ENCODE measurements at regions of chr15 and their contacts with region 1.

Region 1: GRCh38 chr15:72827226-72827625 is 43.7 kb upstream of the ADPGK start:
- DNase-seq: no peak
- H3K4me3 ChIP-seq: no peak overlapping the region
- H3K27ac ChIP-seq: no peak overlapping the region
- H3K4me1 ChIP-seq: peaks cover 0 to 9% (median 2%) of the 10 kb centered on the region in 4 donors
- H3K27me3 ChIP-seq: peaks cover 0 to 6% (median 0%) of the 10 kb centered on the region in 4 donors
- CTCF ChIP-seq: no peak
- EP300 ChIP-seq: no peak
- POLR2A ChIP-seq: no peak

Region 2: GRCh38 chr15:72521682-72522081 is 305.5 kb before region 1 on chr15:
- intact Hi-C with region 1: no loop called
- DNase-seq: no peak
- H3K4me3 ChIP-seq: no peak overlapping the region
- H3K27ac ChIP-seq: no peak overlapping the region
- H3K4me1 ChIP-seq: peaks cover 2 to 22% (median 10%) of the 10 kb centered on the region in 4 donors
- H3K27me3 ChIP-seq: no peaks in the 10 kb centered on the region
- CTCF ChIP-seq: no peak
- EP300 ChIP-seq: no peak
- POLR2A ChIP-seq: no peak

Region 3: GRCh38 chr15:72813345-72814004 is 13.8 kb before region 1 on chr15:
- intact Hi-C with region 1: loop called (anchors 2 kb)
- DNase-seq: no peak
- H3K4me3 ChIP-seq: no peak overlapping the region
- H3K27ac ChIP-seq: no peak overlapping the region
- H3K4me1 ChIP-seq: no peaks in the 10 kb centered on the region
- H3K27me3 ChIP-seq: no peaks in the 10 kb centered on the region
- CTCF ChIP-seq: no peak
- EP300 ChIP-seq: no peak
- POLR2A ChIP-seq: no peak

Region 4: DNA sequence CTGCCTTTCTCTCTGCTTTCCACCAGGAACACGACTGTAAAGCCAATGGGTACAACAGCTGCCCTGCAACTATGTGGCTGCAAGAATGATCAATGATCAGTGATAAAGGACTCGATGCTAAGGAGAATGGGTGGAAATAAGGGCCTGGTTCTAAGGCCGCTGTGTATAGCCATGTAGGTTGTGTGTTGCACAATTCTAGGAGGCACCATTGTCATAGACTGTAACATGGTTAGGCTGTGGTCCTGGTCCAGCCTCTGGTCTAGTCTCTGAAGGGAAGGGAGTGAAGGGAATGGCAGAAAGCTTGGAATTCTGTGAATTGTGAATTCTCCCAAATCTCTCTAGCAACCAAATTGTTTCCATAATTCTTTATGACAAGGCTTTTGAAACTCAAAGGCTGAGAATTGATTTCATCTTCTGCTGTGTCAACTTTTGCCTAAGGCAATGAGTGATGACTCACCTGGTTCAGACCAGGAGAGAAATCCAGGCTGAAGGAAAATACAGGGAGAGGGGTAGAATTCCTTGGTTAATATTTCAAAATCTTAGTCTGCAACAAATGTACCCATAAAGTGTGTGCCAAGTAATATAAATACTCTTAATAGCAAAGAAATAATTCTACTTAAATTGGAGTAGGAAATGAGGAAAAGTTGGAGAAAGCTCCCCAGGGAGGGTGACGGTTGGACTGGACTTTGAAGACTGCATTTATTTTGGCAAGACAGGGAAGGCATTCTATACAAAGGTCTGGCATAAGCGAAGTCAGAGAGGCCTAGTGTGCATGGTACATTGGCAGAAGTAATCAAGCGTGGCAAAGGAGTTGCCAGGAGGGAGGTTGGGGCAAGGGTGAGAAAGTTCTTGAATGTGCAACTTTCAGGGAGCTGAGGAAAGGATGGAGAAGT is 39.0 kb after region 1 on chr15:
- intact Hi-C with region 1: no loop called
- DNase-seq: peak; percentile 55
- H3K4me3 ChIP-seq: no peak overlapping the region
- H3K27ac ChIP-seq: no peak overlapping the region
- H3K4me1 ChIP-seq: peaks cover 0 to 14% (median 4%) of the 10 kb centered on the region in 4 donors
- H3K27me3 ChIP-seq: peaks cover 0 to 5% (median 0%) of the 10 kb centered on the region in 4 donors
- CTCF ChIP-seq: no peak
- EP300 ChIP-seq: no peak
- POLR2A ChIP-seq: no peak